B cell (primary cell): ENCODE measurements at regions of chr10 and their contacts with region 1.

Region 1: GRCh38 chr10:71708301-71708703 is 11.3 kb downstream of the C10orf105 start:
- DNase-seq: peak; percentile 74
- ATAC-seq: peak; percentile 77
- H3K4me3 ChIP-seq: no peak overlapping the region
- H3K4me3 Mint-ChIP-seq: no peak overlapping the region
- H3K27ac ChIP-seq: no peak overlapping the region
- H3K27ac Mint-ChIP-seq: no peak overlapping the region
- H3K4me1 ChIP-seq: peaks cover 16 to 22% of the 10 kb centered on the region in 2 donors
- H3K4me1 Mint-ChIP-seq: peaks cover 29% of the 10 kb centered on the region
- H3K27me3 ChIP-seq: no peaks in the 10 kb centered on the region
- H3K27me3 Mint-ChIP-seq: no peaks in the 10 kb centered on the region
- CTCF ChIP-seq: peak; percentile 89

Region 2: GRCh38 chr10:71314028-71314693 is 394.1 kb before region 1 on chr10:
- CTCF ChIA-PET with region 1: interaction called, 118 read pairs
- POLR2A ChIA-PET with region 1: interaction called, 3 read pairs
- intact Hi-C with region 1: loop called (anchors 1 kb)
- DNase-seq: peak; percentile 76
- ATAC-seq: peak; percentile 32
- H3K4me3 ChIP-seq: no peak overlapping the region
- H3K4me3 Mint-ChIP-seq: no peak overlapping the region
- H3K27ac ChIP-seq: no peak overlapping the region
- H3K27ac Mint-ChIP-seq: no peak overlapping the region
- H3K4me1 ChIP-seq: peaks cover 7 to 20% of the 10 kb centered on the region in 2 donors
- H3K4me1 Mint-ChIP-seq: peaks cover 16% of the 10 kb centered on the region
- H3K27me3 ChIP-seq: peaks cover 0 to 4% (median 0%) of the 10 kb centered on the region in 4 experiments
- H3K27me3 Mint-ChIP-seq: peaks cover 12% of the 10 kb centered on the region
- CTCF ChIP-seq: peak; percentile 97

Region 3: GRCh38 chr10:71378336-71379117 is 329.8 kb before region 1 on chr10:
- CTCF ChIA-PET with region 1: interaction called, 20 read pairs
- POLR2A ChIA-PET with region 1: no interaction called
- intact Hi-C with region 1: no loop called
- DNase-seq: peak; percentile 70
- ATAC-seq: no peak
- H3K4me3 ChIP-seq: peak overlapping the region in 1 of 5 experiments; percentile 22
- H3K4me3 Mint-ChIP-seq: peak overlapping the region; percentile 65
- H3K27ac ChIP-seq: peak overlapping the region; percentile 11 to 48
- H3K27ac Mint-ChIP-seq: peak overlapping the region; percentile 84
- H3K4me1 ChIP-seq: peaks cover 31 to 47% of the 10 kb centered on the region in 2 donors
- H3K4me1 Mint-ChIP-seq: peaks cover 37% of the 10 kb centered on the region
- H3K27me3 ChIP-seq: no peaks in the 10 kb centered on the region
- H3K27me3 Mint-ChIP-seq: no peaks in the 10 kb centered on the region
- CTCF ChIP-seq: no peak

Region 4: GRCh38 chr10:71396084-71396720 is 312.1 kb before region 1 on chr10:
- CTCF ChIA-PET with region 1: interaction called, 16 read pairs
- POLR2A ChIA-PET with region 1: interaction called, 4 read pairs
- intact Hi-C with region 1: loop called (anchors 5 kb)
- DNase-seq: peak; percentile 68
- ATAC-seq: peak; percentile 66
- H3K4me3 ChIP-seq: peak overlapping the region in 4 of 5 experiments; percentile 24 to 58 (median 51)
- H3K4me3 Mint-ChIP-seq: peak overlapping the region; percentile 78
- H3K27ac ChIP-seq: no peak overlapping the region
- H3K27ac Mint-ChIP-seq: no peak overlapping the region
- H3K4me1 ChIP-seq: peaks cover 17% of the 10 kb centered on the region in 2 donors
- H3K4me1 Mint-ChIP-seq: peaks cover 11% of the 10 kb centered on the region
- H3K27me3 ChIP-seq: peaks cover 0 to 56% (median 22%) of the 10 kb centered on the region in 4 experiments
- H3K27me3 Mint-ChIP-seq: peaks cover 57% of the 10 kb centered on the region
- CTCF ChIP-seq: no peak

Region 5: DNA sequence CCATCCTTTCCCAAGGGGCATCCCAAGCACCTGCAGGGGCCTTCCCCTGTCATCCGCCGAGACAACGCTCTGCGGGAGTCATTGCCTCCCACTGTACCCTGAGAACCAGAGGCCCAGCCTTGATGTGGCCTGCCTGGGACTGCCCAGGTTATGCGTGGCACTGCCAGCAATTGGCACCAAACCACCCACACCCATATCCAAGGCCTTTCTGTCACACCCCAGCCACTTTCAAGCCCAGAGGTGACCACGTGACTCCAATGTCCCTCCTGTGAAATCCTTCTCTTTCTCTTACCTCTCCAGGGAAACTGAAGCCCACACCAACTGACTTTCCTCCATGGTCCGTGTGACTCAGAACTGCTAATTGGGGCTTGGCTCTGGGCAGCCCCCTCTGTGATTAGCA is 112.7 kb before region 1 on chr10:
- CTCF ChIA-PET with region 1: no interaction called
- POLR2A ChIA-PET with region 1: no interaction called
- intact Hi-C with region 1: no loop called
- DNase-seq: no peak
- ATAC-seq: no peak
- H3K4me3 ChIP-seq: no peak overlapping the region
- H3K4me3 Mint-ChIP-seq: no peak overlapping the region
- H3K27ac ChIP-seq: no peak overlapping the region
- H3K27ac Mint-ChIP-seq: no peak overlapping the region
- H3K4me1 ChIP-seq: peaks cover 0 to 8% of the 10 kb centered on the region in 2 donors
- H3K4me1 Mint-ChIP-seq: peaks cover 9% of the 10 kb centered on the region
- H3K27me3 ChIP-seq: peaks cover 0 to 3% (median 0%) of the 10 kb centered on the region in 4 experiments
- H3K27me3 Mint-ChIP-seq: peaks cover 7% of the 10 kb centered on the region
- CTCF ChIP-seq: no peak

Region 6: GRCh38 chr10:71608819-71609768 is 99.2 kb before region 1 on chr10:
- CTCF ChIA-PET with region 1: interaction called, 19 read pairs
- POLR2A ChIA-PET with region 1: no interaction called
- intact Hi-C with region 1: no loop called
- DNase-seq: peak; percentile 75
- ATAC-seq: no peak
- H3K4me3 ChIP-seq: no peak overlapping the region
- H3K4me3 Mint-ChIP-seq: no peak overlapping the region
- H3K27ac ChIP-seq: no peak overlapping the region
- H3K27ac Mint-ChIP-seq: no peak overlapping the region
- H3K4me1 ChIP-seq: no peaks in the 10 kb centered on the region
- H3K4me1 Mint-ChIP-seq: peaks cover 2% of the 10 kb centered on the region
- H3K27me3 ChIP-seq: peaks cover 0 to 15% (median 0%) of the 10 kb centered on the region in 4 experiments
- H3K27me3 Mint-ChIP-seq: peaks cover 10% of the 10 kb centered on the region
- CTCF ChIP-seq: peak; percentile 76

Region 7: GRCh38 chr10:71696628-71697326 is 11.5 kb before region 1 on chr10:
- CTCF ChIA-PET with region 1: interaction called, 199 read pairs
- POLR2A ChIA-PET with region 1: interaction called, 3 read pairs
- intact Hi-C with region 1: no loop called
- DNase-seq: peak; percentile 69
- ATAC-seq: no peak
- H3K4me3 ChIP-seq: no peak overlapping the region
- H3K4me3 Mint-ChIP-seq: no peak overlapping the region
- H3K27ac ChIP-seq: no peak overlapping the region
- H3K27ac Mint-ChIP-seq: peak overlapping the region; percentile 20
- H3K4me1 ChIP-seq: peaks cover 39 to 55% of the 10 kb centered on the region in 2 donors
- H3K4me1 Mint-ChIP-seq: peaks cover 53% of the 10 kb centered on the region
- H3K27me3 ChIP-seq: peaks cover 0 to 6% (median 0%) of the 10 kb centered on the region in 4 experiments
- H3K27me3 Mint-ChIP-seq: no peaks in the 10 kb centered on the region
- CTCF ChIP-seq: peak; percentile 84

Region 8: DNA sequence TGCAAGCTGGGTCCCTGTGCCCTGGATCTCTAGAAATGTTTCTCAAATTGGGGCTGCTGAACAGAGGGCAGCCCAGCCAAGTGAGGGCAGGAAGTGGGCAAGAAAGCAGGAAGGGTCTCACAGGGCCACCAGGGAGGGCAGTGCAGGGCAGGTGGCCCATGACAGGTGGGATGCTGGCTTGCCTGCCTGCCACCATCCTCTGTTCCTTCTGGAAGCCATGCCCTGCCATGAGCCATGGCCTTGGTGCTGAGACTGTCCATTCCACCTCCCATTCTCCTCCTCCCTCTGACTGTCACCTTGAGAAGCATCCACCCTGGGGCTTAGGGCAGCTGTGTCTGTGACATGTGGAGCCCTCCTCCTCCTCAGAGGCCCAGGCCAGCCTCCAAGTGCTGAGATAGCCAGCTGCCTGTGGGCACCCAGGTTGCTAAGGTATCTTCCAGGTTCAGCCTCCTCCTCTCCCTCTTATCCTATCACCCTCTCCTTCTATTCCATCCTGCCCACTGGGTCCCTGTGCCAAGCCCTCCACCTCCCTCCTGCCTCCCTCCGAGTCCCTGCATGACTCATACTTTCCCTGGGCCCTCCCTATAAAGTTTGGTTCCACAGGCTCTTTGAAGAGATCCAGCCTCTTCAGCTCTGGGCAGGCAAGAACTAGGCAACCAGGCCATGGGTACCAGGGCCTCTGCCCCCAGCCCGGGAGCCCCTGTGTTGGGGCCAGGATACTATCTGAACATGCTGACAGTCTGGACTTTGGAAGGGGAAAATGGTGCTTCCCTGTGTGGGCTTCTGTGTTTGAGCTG is 63.7 kb after region 1 on chr10:
- CTCF ChIA-PET with region 1: interaction called, 25 read pairs
- POLR2A ChIA-PET with region 1: interaction called, 4 read pairs
- intact Hi-C with region 1: no loop called
- DNase-seq: peak; percentile 27
- ATAC-seq: no peak
- H3K4me3 ChIP-seq: peak overlapping the region; percentile 82 to 97 (median 90)
- H3K4me3 Mint-ChIP-seq: peak overlapping the region; percentile 94
- H3K27ac ChIP-seq: peak overlapping the region; percentile 88 to 95
- H3K27ac Mint-ChIP-seq: peak overlapping the region; percentile 92
- H3K4me1 ChIP-seq: peaks cover 90 to 98% of the 10 kb centered on the region in 2 donors
- H3K4me1 Mint-ChIP-seq: peaks cover 93% of the 10 kb centered on the region
- H3K27me3 ChIP-seq: no peaks in the 10 kb centered on the region
- H3K27me3 Mint-ChIP-seq: no peaks in the 10 kb centered on the region
- CTCF ChIP-seq: no peak